ENCODE measurements at regions of chr11 and their contacts with region 1.

Region 1: DNA sequence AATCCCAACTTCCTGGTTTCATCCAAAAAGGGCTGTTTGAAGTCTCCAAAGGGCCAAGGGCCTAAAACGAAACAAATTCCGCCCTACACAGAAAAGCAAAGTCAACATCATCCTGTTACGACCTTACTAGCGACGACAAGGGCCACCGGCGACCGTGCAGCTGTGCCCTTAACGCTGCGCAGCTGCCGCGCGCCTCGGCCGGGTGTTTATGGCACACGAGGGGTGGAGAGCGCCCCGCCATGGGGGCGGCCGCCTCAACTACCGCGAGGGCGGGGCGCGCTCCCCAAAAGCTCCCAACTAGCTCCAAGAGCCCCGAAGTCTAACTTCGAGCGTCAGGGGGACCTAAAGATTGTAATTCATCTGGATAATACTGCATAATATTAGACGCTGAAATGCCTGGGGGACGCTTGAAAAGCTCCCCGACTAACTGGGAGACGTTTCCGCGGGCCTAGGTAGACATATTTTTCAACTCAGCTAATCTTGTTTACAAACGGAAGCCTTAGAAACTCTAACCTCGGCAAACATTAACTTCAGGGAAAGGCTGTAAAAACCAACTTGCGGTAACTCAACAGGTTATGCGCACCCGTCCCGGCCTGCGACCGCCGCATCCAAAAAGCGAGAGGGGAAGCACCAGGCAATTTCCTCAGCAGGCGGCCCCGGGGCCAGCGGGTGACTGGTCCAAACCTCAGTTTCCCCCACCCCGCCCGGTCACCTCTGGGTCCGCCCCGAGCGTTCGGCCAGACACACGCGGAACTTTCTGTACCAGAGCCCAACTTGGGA is 694 bp downstream of the TMEM123 start:
- DNase-seq: peak; percentile 63 to 86 (median 78)
- ATAC-seq: peak; percentile 58 to 66
- H3K4me3 Mint-ChIP-seq: peak overlapping the region; percentile 88 to 100 (median 95)
- H3K27ac Mint-ChIP-seq: peak overlapping the region; percentile 90 to 99 (median 96)
- H3K4me1 Mint-ChIP-seq: peaks cover 43 to 80% (median 75%) of the 10 kb centered on the region in 4 donors
- H3K27me3 Mint-ChIP-seq: no peaks in the 10 kb centered on the region

Region 2: GRCh38 chr11:102390667-102391465 is 61.0 kb before region 1 on chr11:
- POLR2A ChIA-PET with region 1: interaction called, 51 read pairs
- DNase-seq: peak in 9 of 10 donors; percentile 18 to 74 (median 47)
- ATAC-seq: peak; percentile 62 to 69
- H3K4me3 Mint-ChIP-seq: peak overlapping the region in 1 of 10 donors; percentile 19
- H3K27ac Mint-ChIP-seq: peak overlapping the region in 9 of 10 donors; percentile 3 to 87 (median 81)
- H3K4me1 Mint-ChIP-seq: peaks cover 16 to 50% (median 45%) of the 10 kb centered on the region in 4 donors
- H3K27me3 Mint-ChIP-seq: no peaks in the 10 kb centered on the region

Region 3: DNA sequence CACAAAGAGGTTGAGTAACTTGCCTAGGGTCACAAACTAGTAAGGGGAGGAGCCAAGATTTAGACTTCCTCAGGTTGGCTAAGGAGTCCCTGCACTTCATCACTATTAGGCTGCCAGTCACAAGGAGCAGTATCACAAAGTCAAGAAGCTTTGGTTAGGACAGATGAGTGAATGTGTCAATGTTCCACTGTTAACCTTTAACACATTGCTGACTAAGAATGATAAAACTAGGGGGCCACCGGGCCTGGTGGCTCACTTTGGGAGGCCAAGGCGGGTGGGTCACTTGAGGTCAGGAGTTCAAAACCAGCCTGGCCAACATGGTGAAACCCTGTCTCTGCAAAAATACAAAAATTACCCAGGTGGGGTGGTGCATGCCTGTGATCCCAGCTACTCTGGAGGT is 31.3 kb before region 1 on chr11:
- POLR2A ChIA-PET with region 1: interaction called, 26 read pairs
- DNase-seq: no peak
- ATAC-seq: no peak
- H3K4me3 Mint-ChIP-seq: peak overlapping the region in 8 of 10 donors; percentile 11 to 54 (median 43)
- H3K27ac Mint-ChIP-seq: peak overlapping the region in 9 of 10 donors; percentile 60 to 94 (median 77)
- H3K4me1 Mint-ChIP-seq: peaks cover 48 to 98% (median 95%) of the 10 kb centered on the region in 4 donors
- H3K27me3 Mint-ChIP-seq: no peaks in the 10 kb centered on the region

Region 4: GRCh38 chr11:102438311-102439062 is 13.4 kb before region 1 on chr11:
- POLR2A ChIA-PET with region 1: interaction called, 11 read pairs
- DNase-seq: peak in 5 of 10 donors; percentile 17 to 71 (median 31)
- ATAC-seq: peak; percentile 10 to 20
- H3K4me3 Mint-ChIP-seq: peak overlapping the region; percentile 54 to 88 (median 75)
- H3K27ac Mint-ChIP-seq: peak overlapping the region; percentile 79 to 94 (median 86)
- H3K4me1 Mint-ChIP-seq: peaks cover 52 to 88% (median 87%) of the 10 kb centered on the region in 4 donors
- H3K27me3 Mint-ChIP-seq: no peaks in the 10 kb centered on the region

Region 5: GRCh38 chr11:102476812-102477211 is 24.9 kb after region 1 on chr11:
- POLR2A ChIA-PET with region 1: interaction called, 12 read pairs
- DNase-seq: peak in 4 of 10 donors; percentile 12 to 27 (median 22)
- ATAC-seq: peak; percentile 86 to 88
- H3K4me3 Mint-ChIP-seq: peak overlapping the region in 9 of 10 donors; percentile 50 to 73 (median 64)
- H3K27ac Mint-ChIP-seq: peak overlapping the region; percentile 74 to 96 (median 93)
- H3K4me1 Mint-ChIP-seq: peaks cover 36 to 69% (median 59%) of the 10 kb centered on the region in 4 donors
- H3K27me3 Mint-ChIP-seq: no peaks in the 10 kb centered on the region

Region 6: DNA sequence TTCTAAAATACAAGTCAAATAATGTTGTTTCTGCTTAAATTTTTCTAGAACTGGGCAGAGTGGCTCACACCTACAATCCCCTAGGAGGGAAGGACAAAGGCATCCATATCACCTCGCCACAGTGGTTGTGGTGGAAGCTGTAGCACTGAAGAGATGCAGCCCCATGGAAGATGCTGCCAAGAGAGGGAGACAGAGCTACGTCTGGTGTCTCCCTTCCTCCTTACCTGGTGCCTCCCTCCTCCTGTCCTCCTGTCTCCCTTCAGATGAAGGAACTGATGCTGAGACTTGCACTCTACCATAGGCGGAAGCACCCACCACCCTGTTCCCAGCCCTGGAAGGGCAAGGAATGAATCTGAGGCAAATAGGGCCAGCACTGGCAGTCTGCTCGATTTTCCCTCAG is 231.4 kb after region 1 on chr11:
- POLR2A ChIA-PET with region 1: no interaction called
- DNase-seq: no peak
- ATAC-seq: no peak
- H3K4me3 Mint-ChIP-seq: no peak overlapping the region
- H3K27ac Mint-ChIP-seq: no peak overlapping the region
- H3K4me1 Mint-ChIP-seq: no peaks in the 10 kb centered on the region
- H3K27me3 Mint-ChIP-seq: peaks cover 14 to 32% (median 16%) of the 10 kb centered on the region in 5 donors